ENCODE measurements at regions of chr12 and their contacts with region 1.

Region 1: GRCh38 chr12:22443379-22444316 is 100.7 kb downstream of the C2CD5 start:
- DNase-seq: peak; percentile 84
- H3K4me3 ChIP-seq: no peak overlapping the region
- H3K27ac ChIP-seq: no peak overlapping the region
- H3K4me1 ChIP-seq: no peaks in the 10 kb centered on the region
- CTCF ChIP-seq: peak; percentile 91

Region 2: GRCh38 chr12:21697904-21698630 is 745.6 kb before region 1 on chr12:
- CTCF ChIA-PET with region 1: no interaction called
- POLR2A ChIA-PET with region 1: no interaction called
- intact Hi-C with region 1: loop called (anchors 1 kb)
- DNase-seq: peak; percentile 30
- H3K4me3 ChIP-seq: no peak overlapping the region
- H3K27ac ChIP-seq: no peak overlapping the region
- H3K4me1 ChIP-seq: no peaks in the 10 kb centered on the region
- CTCF ChIP-seq: peak; percentile 91

Region 3: GRCh38 chr12:22083167-22083566 is 360.5 kb before region 1 on chr12:
- CTCF ChIA-PET with region 1: no interaction called
- POLR2A ChIA-PET with region 1: interaction called, 3 read pairs
- intact Hi-C with region 1: loop called (anchors 5 kb)
- DNase-seq: peak; percentile 31
- H3K4me3 ChIP-seq: no peak overlapping the region
- H3K27ac ChIP-seq: no peak overlapping the region
- H3K4me1 ChIP-seq: no peaks in the 10 kb centered on the region
- CTCF ChIP-seq: peak; percentile 76

Region 4: GRCh38 chr12:22100958-22101748 is 342.5 kb before region 1 on chr12:
- CTCF ChIA-PET with region 1: no interaction called
- POLR2A ChIA-PET with region 1: no interaction called
- intact Hi-C with region 1: loop called (anchors 1 kb)
- DNase-seq: peak; percentile 30
- H3K4me3 ChIP-seq: no peak overlapping the region
- H3K27ac ChIP-seq: no peak overlapping the region
- H3K4me1 ChIP-seq: no peaks in the 10 kb centered on the region
- CTCF ChIP-seq: peak; percentile 70

Region 5: DNA sequence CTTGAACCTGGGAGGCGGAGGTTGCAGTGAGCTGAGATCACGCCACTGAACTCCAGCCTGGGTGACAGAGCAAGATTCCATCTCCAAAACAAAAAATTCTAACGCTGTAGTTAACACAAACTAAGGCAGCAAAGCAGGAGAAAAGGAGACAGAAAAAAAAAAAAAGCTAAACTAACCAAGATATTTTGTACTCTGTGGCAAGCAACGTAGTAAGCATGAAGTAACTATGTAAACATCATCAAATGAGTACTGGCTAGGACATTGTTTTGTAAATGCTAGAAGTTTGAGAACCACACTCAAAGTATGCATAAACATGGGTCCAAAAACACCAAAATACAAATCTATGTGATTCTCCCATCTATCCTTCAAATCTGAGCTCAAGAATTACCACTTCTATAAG is 56.5 kb after region 1 on chr12:
- CTCF ChIA-PET with region 1: no interaction called
- POLR2A ChIA-PET with region 1: no interaction called
- intact Hi-C with region 1: no loop called
- DNase-seq: no peak
- H3K4me3 ChIP-seq: no peak overlapping the region
- H3K27ac ChIP-seq: no peak overlapping the region
- H3K4me1 ChIP-seq: no peaks in the 10 kb centered on the region
- CTCF ChIP-seq: no peak